PC-9 (cell line): ENCODE measurements at regions of chr7 and their contacts with region 1.

Region 1: GRCh38 chr7:8514781-8515519 is 81.5 kb downstream of the NXPH1 start:
- DNase-seq: no peak
- H3K4me3 ChIP-seq: no peak overlapping the region
- H3K27ac ChIP-seq: no peak overlapping the region
- H3K4me1 ChIP-seq: no peaks in the 10 kb centered on the region
- H3K27me3 ChIP-seq: 0 out of 2 replicates have a peak, but pooled peaks cover 3% of the 10 kb centered on the region
- CTCF ChIP-seq: no peak

Region 2: DNA sequence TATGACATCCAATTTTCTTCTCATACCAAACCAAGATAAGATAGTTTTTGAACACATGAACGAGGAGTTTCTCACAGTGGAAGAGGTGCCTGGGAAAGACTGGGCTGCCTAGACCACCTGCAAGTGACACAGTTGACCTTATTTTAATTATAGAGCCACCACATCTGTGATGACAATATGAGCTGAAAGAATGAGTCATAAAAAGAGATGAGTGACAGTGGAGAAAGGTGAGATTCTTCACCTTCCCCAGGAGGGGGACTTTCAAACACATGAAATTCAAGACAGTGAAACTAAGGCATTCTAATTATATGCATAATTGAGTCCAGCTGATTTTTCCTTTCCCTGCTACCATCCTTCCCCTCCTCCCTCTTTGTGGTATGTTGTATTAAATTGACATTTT is 393.9 kb after region 1 on chr7:
- CTCF ChIA-PET with region 1: no interaction called
- POLR2A ChIA-PET with region 1: interaction called, 10 read pairs
- intact Hi-C with region 1: no loop called
- DNase-seq: no peak
- H3K4me3 ChIP-seq: no peak overlapping the region
- H3K27ac ChIP-seq: no peak overlapping the region
- H3K4me1 ChIP-seq: no peaks in the 10 kb centered on the region
- H3K27me3 ChIP-seq: no peaks in the 10 kb centered on the region
- CTCF ChIP-seq: no peak